CD4-positive, alpha-beta memory T cell (primary cell): ENCODE measurements at regions of chr18 and their contacts with region 1.

Region 1: DNA sequence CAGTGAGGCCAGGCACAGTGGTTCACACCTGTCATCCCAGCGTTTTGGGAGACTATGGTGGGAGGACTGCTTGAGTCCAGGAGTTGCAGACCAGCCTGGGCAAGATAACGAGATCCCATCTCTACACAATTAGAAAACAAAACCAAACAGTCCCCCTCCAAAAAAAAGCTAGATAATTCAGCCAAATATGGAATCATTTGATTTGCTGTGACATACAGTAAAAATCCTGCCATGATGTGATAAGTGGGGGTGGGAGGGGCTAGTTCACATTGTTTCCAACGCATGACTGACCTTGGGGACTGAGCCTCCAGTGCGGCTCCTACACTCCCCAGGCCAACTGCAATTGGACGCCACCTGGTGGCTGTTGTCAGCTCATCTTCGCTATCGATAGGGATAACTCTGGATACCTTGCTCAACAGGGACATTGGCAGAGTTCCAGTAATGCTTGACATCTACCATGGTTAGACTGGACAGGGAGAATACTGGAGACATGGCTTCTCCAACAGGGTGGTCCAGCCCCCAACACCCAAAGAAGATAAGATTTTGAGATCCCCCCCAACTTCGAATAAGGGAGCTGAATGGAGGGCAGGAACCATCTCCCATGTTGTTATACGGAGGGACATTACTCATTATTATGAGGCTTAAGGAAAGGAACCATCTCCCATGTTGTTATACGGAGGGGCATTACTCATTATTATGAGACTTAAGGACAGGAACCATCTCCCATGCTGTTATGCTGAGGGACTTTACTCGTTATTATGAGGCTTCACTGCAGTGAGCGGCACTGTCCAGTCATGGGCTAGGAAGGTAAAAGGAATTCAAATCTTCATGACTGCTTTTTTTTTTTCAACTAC is 135.9 kb downstream of the TGIF1 start:
- DNase-seq: peak; percentile 55 to 69 (median 60)
- H3K4me3 ChIP-seq: no peak overlapping the region
- H3K4me3 Mint-ChIP-seq: peak overlapping the region in 4 of 8 donors; percentile 14 to 39 (median 30)
- H3K27ac ChIP-seq: no peak overlapping the region
- H3K27ac Mint-ChIP-seq: peak overlapping the region in 6 of 7 donors; percentile 64 to 86 (median 76)
- H3K4me1 ChIP-seq: peaks cover 13% of the 10 kb centered on the region
- H3K4me1 Mint-ChIP-seq: peaks cover 7 to 19% (median 12%) of the 10 kb centered on the region in 4 donors
- H3K27me3 ChIP-seq: no peaks in the 10 kb centered on the region
- H3K27me3 Mint-ChIP-seq: no peaks in the 10 kb centered on the region

Region 2: DNA sequence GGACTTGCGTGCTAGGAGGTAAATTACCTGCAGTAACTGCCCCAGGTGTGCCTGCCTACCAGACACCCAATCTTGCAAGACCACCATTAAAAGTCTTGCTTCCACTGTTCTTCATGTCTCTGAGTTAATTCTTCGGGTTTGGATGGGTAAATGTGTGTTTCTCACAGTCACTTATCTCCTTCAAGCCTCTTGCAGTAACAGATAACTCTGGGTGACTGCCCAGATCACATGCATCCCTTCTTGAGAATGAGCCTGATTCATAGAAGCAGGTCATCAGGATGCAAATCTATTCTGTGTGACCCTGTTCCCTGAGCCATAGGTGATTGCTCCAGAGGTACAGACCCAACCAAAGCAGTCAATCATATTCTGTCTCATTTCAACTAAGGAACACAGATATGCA is 1209.2 kb before region 1 on chr18:
- CTCF ChIA-PET with region 1: no interaction called
- POLR2A ChIA-PET with region 1: no interaction called
- intact Hi-C with region 1: no loop called
- DNase-seq: no peak
- H3K4me3 ChIP-seq: no peak overlapping the region
- H3K4me3 Mint-ChIP-seq: no peak overlapping the region
- H3K27ac ChIP-seq: no peak overlapping the region
- H3K27ac Mint-ChIP-seq: no peak overlapping the region
- H3K4me1 ChIP-seq: no peaks in the 10 kb centered on the region
- H3K4me1 Mint-ChIP-seq: no peaks in the 10 kb centered on the region
- H3K27me3 ChIP-seq: no peaks in the 10 kb centered on the region
- H3K27me3 Mint-ChIP-seq: peaks cover 23 to 31% of the 10 kb centered on the region in 2 donors

Region 3: DNA sequence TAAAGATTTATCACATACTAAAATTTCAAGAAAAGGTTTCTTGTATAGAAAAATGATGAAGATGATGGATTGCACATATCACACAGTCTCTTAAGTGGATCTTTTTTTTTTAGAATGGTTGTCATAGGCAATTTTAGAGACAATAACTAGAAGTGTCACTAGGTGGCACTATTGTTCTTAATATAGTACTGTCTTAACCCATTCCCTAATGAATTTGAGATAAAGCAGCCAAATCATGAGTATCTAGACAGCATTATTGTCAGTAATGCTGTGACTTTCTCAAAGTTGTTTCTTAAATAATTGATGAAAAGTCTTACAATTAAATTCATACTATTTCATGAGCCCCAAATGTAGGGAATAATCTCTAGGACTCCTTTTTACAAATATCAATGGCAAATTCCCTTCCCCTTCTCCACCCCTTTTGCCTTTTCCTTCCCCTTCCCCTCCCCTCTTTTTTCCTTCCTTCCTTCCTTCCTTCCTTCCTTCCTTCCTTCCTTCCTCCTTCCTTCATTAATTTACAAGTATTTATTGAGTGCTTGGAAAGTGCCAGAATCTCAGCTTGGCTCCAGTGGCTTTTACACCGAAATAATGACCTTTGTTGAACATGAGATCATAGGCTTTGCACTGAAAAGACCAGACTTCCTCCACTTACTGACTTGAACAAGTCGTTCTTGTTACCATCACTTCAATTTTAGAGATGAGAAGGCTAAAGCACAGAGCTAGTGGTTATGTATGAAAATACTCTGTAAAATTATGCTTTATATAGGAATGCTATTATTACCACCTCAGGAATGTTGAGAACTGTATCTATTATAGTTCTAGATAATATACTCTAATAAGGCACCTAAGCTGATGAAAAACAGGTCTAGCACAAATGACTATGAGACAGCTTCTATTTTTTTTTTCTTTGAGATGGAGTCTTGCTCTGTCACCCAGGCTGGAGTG is 304.2 kb before region 1 on chr18:
- CTCF ChIA-PET with region 1: interaction called, 42 read pairs
- POLR2A ChIA-PET with region 1: no interaction called
- intact Hi-C with region 1: loop called (anchors 1 kb)
- DNase-seq: peak in 4 of 5 donors; percentile 69 to 73 (median 72)
- H3K4me3 ChIP-seq: no peak overlapping the region
- H3K4me3 Mint-ChIP-seq: no peak overlapping the region
- H3K27ac ChIP-seq: no peak overlapping the region
- H3K27ac Mint-ChIP-seq: no peak overlapping the region
- H3K4me1 ChIP-seq: no peaks in the 10 kb centered on the region
- H3K4me1 Mint-ChIP-seq: peaks cover 0 to 4% (median 1%) of the 10 kb centered on the region in 4 donors
- H3K27me3 ChIP-seq: no peaks in the 10 kb centered on the region
- H3K27me3 Mint-ChIP-seq: no peaks in the 10 kb centered on the region

Region 4: GRCh38 chr18:3380384-3380961 is 205.4 kb before region 1 on chr18:
- CTCF ChIA-PET with region 1: interaction called, 30 read pairs
- POLR2A ChIA-PET with region 1: no interaction called
- intact Hi-C with region 1: loop called (anchors 1 kb)
- DNase-seq: peak in 4 of 5 donors; percentile 22 to 44 (median 34)
- H3K4me3 ChIP-seq: no peak overlapping the region
- H3K4me3 Mint-ChIP-seq: no peak overlapping the region
- H3K27ac ChIP-seq: no peak overlapping the region
- H3K27ac Mint-ChIP-seq: no peak overlapping the region
- H3K4me1 ChIP-seq: no peaks in the 10 kb centered on the region
- H3K4me1 Mint-ChIP-seq: peaks cover 0 to 2% (median 0%) of the 10 kb centered on the region in 4 donors
- H3K27me3 ChIP-seq: no peaks in the 10 kb centered on the region
- H3K27me3 Mint-ChIP-seq: peaks cover 0 to 5% of the 10 kb centered on the region in 2 donors

Region 5: GRCh38 chr18:3466045-3466444 is 119.8 kb before region 1 on chr18:
- CTCF ChIA-PET with region 1: interaction called, 23 read pairs
- POLR2A ChIA-PET with region 1: interaction called, 3 read pairs
- intact Hi-C with region 1: no loop called
- DNase-seq: no peak
- H3K4me3 ChIP-seq: no peak overlapping the region
- H3K4me3 Mint-ChIP-seq: peak overlapping the region in 1 of 8 donors; percentile 69
- H3K27ac ChIP-seq: no peak overlapping the region
- H3K27ac Mint-ChIP-seq: peak overlapping the region in 3 of 7 donors; percentile 24 to 68 (median 41)
- H3K4me1 ChIP-seq: peaks cover 17% of the 10 kb centered on the region
- H3K4me1 Mint-ChIP-seq: peaks cover 12 to 22% (median 17%) of the 10 kb centered on the region in 4 donors
- H3K27me3 ChIP-seq: no peaks in the 10 kb centered on the region
- H3K27me3 Mint-ChIP-seq: no peaks in the 10 kb centered on the region

Region 6: GRCh38 chr18:3660739-3661515 is 75.0 kb after region 1 on chr18:
- CTCF ChIA-PET with region 1: interaction called, 74 read pairs
- POLR2A ChIA-PET with region 1: interaction called, 7 read pairs
- intact Hi-C with region 1: loop called (anchors 1 kb)
- DNase-seq: no peak
- H3K4me3 ChIP-seq: no peak overlapping the region
- H3K4me3 Mint-ChIP-seq: no peak overlapping the region
- H3K27ac ChIP-seq: no peak overlapping the region
- H3K27ac Mint-ChIP-seq: no peak overlapping the region
- H3K4me1 ChIP-seq: peaks cover 2% of the 10 kb centered on the region
- H3K4me1 Mint-ChIP-seq: peaks cover 0 to 4% (median 4%) of the 10 kb centered on the region in 4 donors
- H3K27me3 ChIP-seq: no peaks in the 10 kb centered on the region
- H3K27me3 Mint-ChIP-seq: peaks cover 2 to 3% of the 10 kb centered on the region in 2 donors